ENCODE measurements at regions of chr9 and their contacts with region 1.

Region 1: DNA sequence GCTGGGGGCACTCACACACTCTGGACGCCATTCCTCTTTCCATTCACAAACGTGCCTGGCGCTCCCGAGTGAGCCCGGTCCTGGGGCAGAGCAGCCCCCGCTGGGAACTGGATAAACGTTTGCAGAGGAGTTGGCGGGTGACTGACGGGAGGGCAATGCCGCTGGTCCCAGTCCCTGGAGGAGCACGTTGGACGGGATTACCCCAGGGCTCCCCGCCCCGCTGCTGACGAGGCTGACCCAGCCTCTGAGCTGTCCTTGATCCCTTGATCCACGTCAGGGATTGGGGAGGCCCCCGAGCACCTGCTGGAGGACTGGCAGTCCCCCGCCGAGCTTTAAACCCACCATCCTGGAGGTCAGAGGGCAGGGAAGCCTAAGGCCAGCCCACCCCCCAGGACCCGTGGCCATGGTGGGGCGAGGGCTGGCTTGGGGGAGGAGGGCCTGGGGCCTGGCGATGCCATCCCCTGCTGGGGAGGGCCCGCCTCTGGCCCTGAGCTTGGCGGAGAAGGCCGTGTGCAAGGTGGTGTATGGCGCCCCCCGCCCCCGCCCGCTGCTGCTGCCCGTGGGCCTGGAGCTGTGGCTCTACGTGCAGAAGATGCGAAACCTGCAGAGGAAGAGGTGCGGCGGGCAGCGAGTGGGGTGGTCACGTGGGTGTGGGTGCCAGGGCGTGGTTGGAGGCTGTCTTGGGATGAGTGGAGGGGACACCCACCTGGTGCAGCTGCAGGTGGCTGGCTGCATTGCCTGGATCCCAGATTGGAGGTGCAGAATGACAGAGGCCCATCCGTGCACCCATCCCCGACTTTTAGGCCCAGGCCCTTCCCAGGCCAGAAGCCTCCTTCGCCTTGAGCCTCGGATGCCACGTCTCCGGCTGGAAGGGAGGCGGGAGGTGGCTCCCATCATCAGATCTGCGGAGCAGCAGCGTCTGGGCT is 4.5 kb downstream of the GPSM1 start:
- DNase-seq: no peak
- ATAC-seq: no peak
- H3K4me3 ChIP-seq: no peak overlapping the region
- H3K4me3 Mint-ChIP-seq: no peak overlapping the region
- H3K27ac ChIP-seq: no peak overlapping the region
- H3K27ac Mint-ChIP-seq: no peak overlapping the region
- H3K4me1 ChIP-seq: peaks cover 0 to 20% of the 10 kb centered on the region in 2 experiments
- H3K4me1 Mint-ChIP-seq: peaks cover 4% of the 10 kb centered on the region in 3 donors
- H3K27me3 ChIP-seq: peaks cover 0 to 10% of the 10 kb centered on the region in 2 experiments
- H3K27me3 Mint-ChIP-seq: peaks cover 0 to 3% of the 10 kb centered on the region in 2 donors

Region 2: DNA sequence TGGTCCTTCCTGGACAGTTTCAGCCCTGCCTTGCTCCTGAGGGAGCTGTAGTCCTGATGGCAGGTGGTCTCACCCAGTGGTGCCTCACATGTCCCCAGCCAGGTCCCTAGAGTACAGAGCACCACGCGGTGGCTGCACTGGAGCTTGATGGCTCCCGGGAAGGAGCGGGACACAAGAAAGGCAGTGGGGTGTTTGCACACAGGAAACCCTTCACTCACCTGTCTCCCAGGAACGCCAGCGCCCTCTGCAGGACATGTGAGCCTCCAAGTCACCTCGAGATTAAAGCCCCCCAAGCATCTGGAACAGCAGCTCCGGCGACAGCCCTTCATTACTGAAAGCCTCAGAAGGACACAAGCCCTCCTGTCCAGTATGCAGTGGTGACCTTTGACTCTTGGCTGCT is 193.3 kb before region 1 on chr9:
- CTCF ChIA-PET with region 1: no interaction called
- POLR2A ChIA-PET with region 1: no interaction called
- DNase-seq: peak in 25 of 35 experiments; percentile 12 to 60 (median 31)
- ATAC-seq: no peak
- H3K4me3 ChIP-seq: no peak overlapping the region
- H3K4me3 Mint-ChIP-seq: no peak overlapping the region
- H3K27ac ChIP-seq: no peak overlapping the region
- H3K27ac Mint-ChIP-seq: no peak overlapping the region
- H3K4me1 ChIP-seq: peaks cover 0 to 5% of the 10 kb centered on the region in 2 experiments
- H3K4me1 Mint-ChIP-seq: peaks cover 7 to 8% (median 8%) of the 10 kb centered on the region in 3 donors
- H3K27me3 ChIP-seq: peaks cover 0 to 61% of the 10 kb centered on the region in 2 experiments
- H3K27me3 Mint-ChIP-seq: peaks cover 11 to 31% of the 10 kb centered on the region in 2 donors

Region 3: GRCh38 chr9:136222906-136223285 is 108.9 kb before region 1 on chr9:
- CTCF ChIA-PET with region 1: no interaction called
- POLR2A ChIA-PET with region 1: interaction called in 1 of 2 experiments, 11 read pairs
- DNase-seq: no peak
- ATAC-seq: no peak
- H3K4me3 ChIP-seq: no peak overlapping the region
- H3K4me3 Mint-ChIP-seq: no peak overlapping the region
- H3K27ac ChIP-seq: no peak overlapping the region
- H3K27ac Mint-ChIP-seq: no peak overlapping the region
- H3K4me1 ChIP-seq: peaks cover 0 to 32% of the 10 kb centered on the region in 2 experiments
- H3K4me1 Mint-ChIP-seq: peaks cover 11 to 29% (median 17%) of the 10 kb centered on the region in 3 donors
- H3K27me3 ChIP-seq: no peaks in the 10 kb centered on the region
- H3K27me3 Mint-ChIP-seq: no peaks in the 10 kb centered on the region

Region 4: DNA sequence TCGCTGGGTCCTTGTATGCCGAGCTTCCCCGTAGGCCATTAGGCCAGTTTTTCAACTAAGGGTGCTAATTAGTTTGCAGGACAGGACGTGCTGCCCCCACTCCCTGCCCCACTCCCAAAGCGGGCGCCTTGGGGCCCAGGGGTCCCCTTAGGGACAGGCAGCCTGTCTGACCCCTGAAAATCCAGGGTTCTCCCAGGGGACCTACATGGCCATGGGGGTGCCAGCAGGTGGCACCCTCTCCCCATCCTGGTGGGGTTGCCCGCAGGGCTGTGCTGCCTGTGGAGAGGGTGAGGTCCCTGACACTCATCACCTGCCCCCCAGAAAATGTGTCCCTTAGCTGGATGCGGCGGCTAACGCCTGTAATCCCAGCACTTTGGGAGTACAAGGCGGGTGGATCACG is 19.4 kb before region 1 on chr9:
- CTCF ChIA-PET with region 1: no interaction called
- POLR2A ChIA-PET with region 1: no interaction called
- DNase-seq: peak in 21 of 35 experiments; percentile 13 to 60 (median 29)
- ATAC-seq: peak; percentile 61 to 72 (median 64)
- H3K4me3 ChIP-seq: no peak overlapping the region
- H3K4me3 Mint-ChIP-seq: no peak overlapping the region
- H3K27ac ChIP-seq: no peak overlapping the region
- H3K27ac Mint-ChIP-seq: no peak overlapping the region
- H3K4me1 ChIP-seq: peaks cover 0 to 41% of the 10 kb centered on the region in 2 experiments
- H3K4me1 Mint-ChIP-seq: peaks cover 0 to 4% (median 4%) of the 10 kb centered on the region in 3 donors
- H3K27me3 ChIP-seq: peaks cover 0 to 49% of the 10 kb centered on the region in 2 experiments
- H3K27me3 Mint-ChIP-seq: peaks cover 0 to 3% of the 10 kb centered on the region in 2 donors

Region 5: DNA sequence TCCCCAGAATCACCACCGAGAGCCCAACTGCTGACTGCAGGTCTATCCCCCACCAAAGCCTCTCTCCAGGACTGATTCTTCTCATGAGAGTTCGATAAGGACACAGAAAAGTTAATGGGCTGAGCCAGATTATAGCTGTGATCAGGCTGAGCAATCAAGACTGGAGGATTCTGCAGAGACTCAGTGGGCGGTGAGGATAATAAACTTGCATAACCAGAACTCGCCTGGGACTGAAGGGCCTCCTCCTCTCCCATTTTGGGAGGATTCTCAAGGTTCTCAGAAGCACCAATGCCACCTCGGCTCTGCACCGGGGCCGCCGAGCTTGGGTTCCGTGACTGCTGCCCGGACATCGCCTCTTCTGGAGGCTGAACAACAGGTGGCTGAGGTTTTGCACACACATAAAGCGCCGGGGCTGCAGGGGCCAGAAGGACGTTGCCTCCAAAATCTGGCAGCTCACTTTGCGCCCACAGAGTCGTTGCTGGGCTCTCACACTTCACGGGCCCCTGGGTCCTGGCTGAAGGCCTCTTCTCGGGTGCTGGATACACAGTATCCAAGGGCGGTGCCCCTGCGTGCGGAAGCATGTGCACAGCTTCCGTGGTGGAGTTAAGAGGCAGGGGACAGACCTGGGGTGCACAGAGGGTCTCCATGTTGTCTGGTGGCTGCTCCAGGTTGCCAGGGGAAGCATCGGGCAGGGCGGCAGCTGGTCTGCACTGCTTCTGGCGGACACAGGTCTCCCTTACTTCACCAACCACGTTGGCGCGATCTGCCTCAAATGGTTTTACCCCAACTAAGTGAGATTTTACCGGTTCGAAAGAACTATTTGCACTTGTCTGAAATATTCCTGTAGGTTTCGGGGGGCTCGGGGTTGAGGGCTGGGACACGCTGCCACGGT is 143.4 kb after region 1 on chr9:
- CTCF ChIA-PET with region 1: no interaction called
- POLR2A ChIA-PET with region 1: no interaction called
- DNase-seq: no peak
- ATAC-seq: no peak
- H3K4me3 ChIP-seq: no peak overlapping the region
- H3K4me3 Mint-ChIP-seq: no peak overlapping the region
- H3K27ac ChIP-seq: no peak overlapping the region
- H3K27ac Mint-ChIP-seq: no peak overlapping the region
- H3K4me1 ChIP-seq: peaks cover 0 to 25% of the 10 kb centered on the region in 2 experiments
- H3K4me1 Mint-ChIP-seq: peaks cover 20 to 28% (median 28%) of the 10 kb centered on the region in 3 donors
- H3K27me3 ChIP-seq: no peaks in the 10 kb centered on the region
- H3K27me3 Mint-ChIP-seq: no peaks in the 10 kb centered on the region